ENCODE measurements at regions of chr11 and their contacts with region 1.

Region 1: GRCh38 chr11:101880222-101880621 is 34.6 kb upstream of the CEP126 start:
- DNase-seq: no peak
- H3K4me3 ChIP-seq: no peak overlapping the region
- CTCF ChIP-seq: peak; percentile 44

Region 2: GRCh38 chr11:101866619-101867491 is 13.4 kb before region 1 on chr11:
- CTCF ChIA-PET with region 1: interaction called, 130 read pairs
- POLR2A ChIA-PET with region 1: no interaction called
- DNase-seq: no peak
- H3K4me3 ChIP-seq: no peak overlapping the region
- CTCF ChIP-seq: no peak

Region 3: GRCh38 chr11:101894505-101894904 is 14.3 kb after region 1 on chr11:
- CTCF ChIA-PET with region 1: interaction called, 14 read pairs
- POLR2A ChIA-PET with region 1: no interaction called
- DNase-seq: no peak
- H3K4me3 ChIP-seq: no peak overlapping the region
- CTCF ChIP-seq: no peak